ENCODE measurements at regions of chr9 and their contacts with region 1.

Region 1: DNA sequence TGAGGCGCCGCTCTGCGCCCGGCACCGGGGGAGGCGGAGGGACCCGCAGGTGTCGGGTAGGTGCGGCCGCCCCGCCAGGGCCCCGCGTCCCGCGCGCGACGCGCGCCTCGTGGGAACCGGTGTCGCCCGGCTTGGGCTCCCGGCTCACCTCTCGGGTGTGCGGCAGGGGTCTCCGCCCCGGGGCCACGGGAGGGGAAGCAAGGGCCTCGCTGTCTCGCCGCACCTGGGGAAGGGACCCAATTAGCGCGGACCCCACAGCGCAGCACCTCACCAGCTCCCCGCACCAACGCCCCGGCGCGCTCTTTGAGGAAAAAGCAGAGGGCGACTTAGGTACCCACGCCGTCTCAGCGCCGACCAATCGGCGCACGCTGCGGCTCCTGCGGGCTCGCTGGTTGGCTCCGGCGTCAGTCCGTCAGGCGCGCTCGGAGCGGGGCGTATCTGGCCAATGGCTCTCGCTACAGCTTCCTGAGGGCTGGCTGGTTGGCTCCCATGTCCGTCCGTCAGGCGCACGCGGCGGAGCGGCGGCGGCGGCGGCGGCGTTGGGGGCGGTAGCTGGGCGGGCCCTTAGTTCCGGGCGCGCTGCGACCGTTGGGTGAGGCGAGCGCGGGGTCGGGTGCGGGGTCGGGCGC is at the start of gene TRAF2:
- DNase-seq: peak; percentile 96 to 100 (median 98)
- H3K4me3 ChIP-seq: peak within 1 kb of the TSS; percentile 69 to 96 (median 88)
- H3K27ac ChIP-seq: peak within 1 kb of the TSS in 51 of 59 donors; percentile 1 to 91 (median 69)
- H3K27me3 ChIP-seq: no peaks in the 10 kb centered on the region
- CTCF ChIP-seq: peak in 31 of 56 donors; percentile 9 to 49 (median 27)
- total RNA-seq, gene TRAF2: 11.1 to 47.8 (median 17.7) TPM

Region 2: GRCh38 chr9:136742591-136743391 is 143.3 kb before region 1 on chr9 and contains the start of gene LCN10:
- intact Hi-C with region 1: no loop called
- DNase-seq: no peak
- H3K4me3 ChIP-seq: peak within 1 kb of the TSS in 2 of 59 donors; percentile 16 to 36
- H3K27ac ChIP-seq: no peak within 1 kb of the TSS
- H3K27me3 ChIP-seq: peaks cover 0 to 42% (median 20%) of the 10 kb centered on the region in 45 donors
- CTCF ChIP-seq: peak in 4 of 56 donors; percentile 2 to 29 (median 14)
- total RNA-seq, gene LCN10: 0.14 to 8.5 (median 1.5) TPM in 115 of 120 experiments, not detected in the others

Region 3: GRCh38 chr9:136858844-136859757 is 27.0 kb before region 1 on chr9:
- intact Hi-C with region 1: loop called in 1 of 2 experiments (anchors 5 kb)
- DNase-seq: peak; percentile 62 to 84 (median 74)
- H3K4me3 ChIP-seq: no peak overlapping the region
- H3K27ac ChIP-seq: peak overlapping the region in 55 of 59 donors; percentile 3 to 84 (median 62)
- H3K27me3 ChIP-seq: no peaks in the 10 kb centered on the region
- CTCF ChIP-seq: no peak

Region 4: DNA sequence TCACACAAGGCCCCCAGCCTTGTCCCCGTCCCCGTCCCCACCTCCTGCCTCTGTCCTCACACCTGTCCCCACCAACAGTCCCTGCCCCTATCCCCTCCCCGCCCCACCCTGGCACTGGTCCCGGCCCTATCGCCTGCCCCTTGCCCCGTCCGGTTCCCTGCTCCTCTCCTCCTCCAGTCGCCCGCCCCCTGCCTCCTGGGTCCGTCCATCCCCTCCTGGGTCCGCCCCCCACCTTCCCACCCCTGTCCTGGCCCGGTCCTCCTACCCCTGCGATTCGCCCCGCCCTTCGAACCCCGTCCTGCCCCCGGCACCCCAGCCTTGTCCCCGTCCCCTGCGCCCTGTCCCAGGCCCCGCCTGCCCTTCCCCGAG is 20.3 kb before region 1 on chr9:
- intact Hi-C with region 1: loop called in 1 of 2 experiments (anchors 2 kb)
- DNase-seq: peak in 1 of 10 donors; percentile 41
- H3K4me3 ChIP-seq: peak overlapping the region; percentile 45 to 97 (median 82)
- H3K27ac ChIP-seq: peak overlapping the region in 51 of 59 donors; percentile 21 to 93 (median 79)
- H3K27me3 ChIP-seq: no peaks in the 10 kb centered on the region
- CTCF ChIP-seq: no peak

Measured in dorsolateral prefrontal cortex (tissue), 120 donors.